ENCODE measurements at regions of chr2 and their contacts with region 1.

Region 1: DNA sequence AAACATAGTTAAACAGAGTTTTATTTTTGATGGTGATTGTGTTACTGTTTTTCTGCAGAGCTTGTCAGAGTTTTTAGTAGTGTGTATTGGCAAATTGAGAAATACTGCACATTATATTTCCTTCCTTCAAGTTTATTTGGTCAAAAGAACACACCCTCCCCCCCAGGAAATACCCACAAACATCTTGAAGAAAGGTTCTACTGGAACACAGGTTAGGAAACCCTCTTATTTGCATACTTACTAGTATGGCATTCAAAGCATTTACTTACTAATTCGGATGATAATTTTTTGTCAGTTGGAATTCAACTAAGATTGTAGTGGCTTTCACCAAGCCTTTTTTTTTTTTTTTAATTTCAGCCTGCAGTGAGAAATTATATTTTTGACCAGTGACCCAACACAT is 9.1 kb downstream of the CAB39 start:
- DNase-seq: peak; percentile 69
- H3K4me3 Mint-ChIP-seq: peak overlapping the region; percentile 69
- H3K27ac Mint-ChIP-seq: peak overlapping the region; percentile 69
- H3K4me1 Mint-ChIP-seq: peaks cover 73% of the 10 kb centered on the region
- H3K27me3 Mint-ChIP-seq: no peaks in the 10 kb centered on the region

Region 2: GRCh38 chr2:230737791-230738226 is 16.1 kb after region 1 on chr2:
- intact Hi-C with region 1: loop called (anchors 2 kb)
- DNase-seq: no peak
- H3K4me3 Mint-ChIP-seq: peak overlapping the region; percentile 24
- H3K27ac Mint-ChIP-seq: peak overlapping the region; percentile 63
- H3K4me1 Mint-ChIP-seq: peaks cover 64% of the 10 kb centered on the region
- H3K27me3 Mint-ChIP-seq: no peaks in the 10 kb centered on the region

Region 3: DNA sequence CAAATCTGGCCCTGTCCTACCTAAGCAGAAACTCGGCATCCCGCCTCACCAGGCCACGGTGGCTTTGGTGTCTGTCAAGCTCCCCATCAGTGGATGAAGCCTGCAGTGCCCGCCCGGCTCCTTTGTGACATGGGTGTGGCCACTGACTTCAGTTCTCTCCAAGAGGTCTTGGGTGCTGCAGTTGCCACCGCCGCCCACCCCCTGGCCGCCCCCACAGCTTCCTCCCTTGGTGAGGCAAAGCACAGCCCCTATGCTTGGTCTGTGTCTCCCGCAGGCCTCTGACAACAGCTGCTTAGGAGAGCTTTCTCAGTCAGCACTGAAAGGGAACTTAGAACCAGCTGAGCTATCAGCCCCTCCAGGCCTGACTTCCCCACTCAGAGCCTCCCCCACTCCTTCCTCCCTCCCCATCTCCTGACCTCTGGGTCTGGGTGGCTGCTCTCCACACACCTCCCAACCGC is 226.2 kb after region 1 on chr2:
- intact Hi-C with region 1: no loop called
- DNase-seq: no peak
- H3K4me3 Mint-ChIP-seq: no peak overlapping the region
- H3K27ac Mint-ChIP-seq: no peak overlapping the region
- H3K4me1 Mint-ChIP-seq: peaks cover 10% of the 10 kb centered on the region
- H3K27me3 Mint-ChIP-seq: peaks cover 28% of the 10 kb centered on the region

Region 4: GRCh38 chr2:231364961-231365810 is 643.5 kb after region 1 on chr2:
- intact Hi-C with region 1: no loop called
- DNase-seq: no peak
- H3K4me3 Mint-ChIP-seq: no peak overlapping the region
- H3K27ac Mint-ChIP-seq: no peak overlapping the region
- H3K4me1 Mint-ChIP-seq: peaks cover 9% of the 10 kb centered on the region
- H3K27me3 Mint-ChIP-seq: peaks cover 2% of the 10 kb centered on the region